ENCODE measurements at regions of chr2 and their contacts with region 1.

Region 1: GRCh38 chr2:26745609-26746327 is 18.3 kb upstream of the SLC35F6 start:
- DNase-seq: peak; percentile 78 to 88 (median 81)
- ATAC-seq: peak; percentile 86 to 91 (median 88)
- H3K4me3 ChIP-seq: no peak overlapping the region
- H3K27ac ChIP-seq: no peak overlapping the region
- H3K4me1 ChIP-seq: peaks cover 0 to 3% (median 0%) of the 10 kb centered on the region in 12 donors
- H3K27me3 ChIP-seq: no peaks in the 10 kb centered on the region
- CTCF ChIP-seq: peak; percentile 91 to 98 (median 93)
- POLR2A ChIP-seq: no peak

Region 2: GRCh38 chr2:26605195-26605998 is 140.4 kb before region 1 on chr2:
- intact Hi-C with region 1: loop called (anchors 1 to 2 kb)
- DNase-seq: peak in 1 of 5 donors; percentile 37
- ATAC-seq: peak in 3 of 4 donors; percentile 53 to 75 (median 72)
- H3K4me3 ChIP-seq: no peak overlapping the region
- H3K27ac ChIP-seq: no peak overlapping the region
- H3K4me1 ChIP-seq: no peaks in the 10 kb centered on the region
- H3K27me3 ChIP-seq: peaks cover 0 to 51% (median 7%) of the 10 kb centered on the region in 9 donors
- CTCF ChIP-seq: peak; percentile 64 to 87 (median 77)
- POLR2A ChIP-seq: no peak

Region 3: DNA sequence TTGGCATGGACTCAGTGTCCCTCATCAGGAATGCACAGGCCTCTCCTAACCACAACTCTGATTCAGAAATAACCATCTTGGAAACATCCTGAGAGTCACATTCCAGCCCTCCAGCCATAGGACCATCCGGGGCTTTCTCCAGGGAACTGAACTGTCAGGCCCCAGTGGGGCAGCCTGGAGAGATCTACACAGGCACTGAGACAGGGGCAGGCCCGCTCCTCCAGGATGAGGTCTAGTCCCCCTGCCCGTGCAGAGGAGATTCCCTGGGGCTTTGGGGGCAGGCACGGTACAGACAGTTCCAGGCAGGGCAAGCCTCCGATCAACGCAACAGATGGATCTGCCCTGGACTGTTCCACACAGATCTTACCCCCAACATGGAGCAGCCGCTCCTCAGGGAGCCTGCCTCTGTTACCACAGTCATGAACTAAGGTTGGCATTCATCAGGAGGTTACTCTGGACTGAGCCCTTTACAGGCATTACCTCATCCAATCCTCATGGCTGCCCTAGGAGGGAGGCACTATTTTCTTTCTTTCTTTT is 41.3 kb before region 1 on chr2:
- intact Hi-C with region 1: no loop called
- DNase-seq: no peak
- ATAC-seq: peak in 3 of 4 donors; percentile 20 to 48 (median 24)
- H3K4me3 ChIP-seq: no peak overlapping the region
- H3K27ac ChIP-seq: peak overlapping the region in 3 of 12 donors; percentile 13 to 70 (median 29)
- H3K4me1 ChIP-seq: peaks cover 0 to 38% (median 9%) of the 10 kb centered on the region in 12 donors
- H3K27me3 ChIP-seq: peaks cover 0 to 5% (median 0%) of the 10 kb centered on the region in 9 donors
- CTCF ChIP-seq: no peak
- POLR2A ChIP-seq: no peak